ENCODE measurements at regions of chr9 and their contacts with region 1.

Region 1: DNA sequence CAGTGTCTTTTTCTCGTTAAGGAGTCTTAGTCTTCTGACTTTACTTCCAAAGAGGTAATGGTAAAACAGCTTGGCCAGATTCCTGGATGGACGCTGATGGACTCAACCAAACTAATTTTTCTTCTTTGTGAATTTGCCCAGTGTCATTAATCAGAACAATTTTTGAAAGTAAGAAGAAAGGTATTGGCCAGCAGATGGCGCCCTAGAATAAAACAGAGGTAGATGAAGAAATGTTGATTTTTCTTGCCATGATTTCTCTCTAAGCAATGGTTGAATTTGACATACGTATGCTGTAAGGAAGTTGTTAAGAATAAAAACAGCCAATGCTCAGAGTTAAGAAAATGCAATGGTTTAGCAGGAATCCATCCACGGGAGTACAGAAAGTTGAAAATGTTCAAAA is 500.0 kb downstream of the DIRAS2 start:
- DNase-seq: peak; percentile 59
- H3K4me3 Mint-ChIP-seq: no peak overlapping the region
- H3K27ac Mint-ChIP-seq: no peak overlapping the region
- H3K4me1 Mint-ChIP-seq: no peaks in the 10 kb centered on the region
- H3K27me3 Mint-ChIP-seq: peaks cover 79% of the 10 kb centered on the region
- CTCF ChIP-seq: peak; percentile 35

Region 2: GRCh38 chr9:90070931-90071660 is 71.5 kb before region 1 on chr9:
- CTCF ChIA-PET with region 1: no interaction called
- POLR2A ChIA-PET with region 1: no interaction called
- intact Hi-C with region 1: no loop called
- DNase-seq: no peak
- H3K4me3 Mint-ChIP-seq: no peak overlapping the region
- H3K27ac Mint-ChIP-seq: no peak overlapping the region
- H3K4me1 Mint-ChIP-seq: no peaks in the 10 kb centered on the region
- H3K27me3 Mint-ChIP-seq: peaks cover 22% of the 10 kb centered on the region
- CTCF ChIP-seq: no peak

Region 3: GRCh38 chr9:90121762-90122161 is 20.8 kb before region 1 on chr9:
- CTCF ChIA-PET with region 1: interaction called, 20 read pairs
- POLR2A ChIA-PET with region 1: no interaction called
- intact Hi-C with region 1: no loop called
- DNase-seq: no peak
- H3K4me3 Mint-ChIP-seq: no peak overlapping the region
- H3K27ac Mint-ChIP-seq: no peak overlapping the region
- H3K4me1 Mint-ChIP-seq: peaks cover 14% of the 10 kb centered on the region
- H3K27me3 Mint-ChIP-seq: peaks cover 13% of the 10 kb centered on the region
- CTCF ChIP-seq: no peak

Region 4: DNA sequence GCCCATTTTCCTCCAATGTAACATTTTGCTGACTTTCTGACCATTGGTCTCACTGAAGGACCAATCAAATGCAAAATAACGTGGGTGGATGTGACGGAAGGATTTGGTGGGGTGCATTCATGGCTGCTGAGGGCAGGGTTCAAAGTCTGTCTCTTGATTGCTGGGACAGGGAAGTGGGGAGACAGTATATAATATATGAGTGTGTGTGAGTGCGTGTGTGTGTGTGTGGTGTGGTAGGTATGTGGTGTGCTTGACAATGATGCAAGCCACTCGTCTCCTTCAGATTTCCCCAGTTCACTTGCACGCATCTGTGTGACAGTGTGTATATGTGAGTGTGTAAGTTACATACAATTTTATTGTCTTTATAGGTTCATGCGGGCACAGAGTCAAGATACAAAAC is 22.7 kb after region 1 on chr9:
- CTCF ChIA-PET with region 1: interaction called, 12 read pairs
- POLR2A ChIA-PET with region 1: no interaction called
- intact Hi-C with region 1: no loop called
- DNase-seq: no peak
- H3K4me3 Mint-ChIP-seq: no peak overlapping the region
- H3K27ac Mint-ChIP-seq: no peak overlapping the region
- H3K4me1 Mint-ChIP-seq: no peaks in the 10 kb centered on the region
- H3K27me3 Mint-ChIP-seq: peaks cover 46% of the 10 kb centered on the region
- CTCF ChIP-seq: no peak

Region 5: GRCh38 chr9:90219548-90220118 is 77.1 kb after region 1 on chr9:
- CTCF ChIA-PET with region 1: interaction called, 3 read pairs
- POLR2A ChIA-PET with region 1: no interaction called
- intact Hi-C with region 1: loop called (anchors 10 kb)
- DNase-seq: peak; percentile 24
- H3K4me3 Mint-ChIP-seq: no peak overlapping the region
- H3K27ac Mint-ChIP-seq: no peak overlapping the region
- H3K4me1 Mint-ChIP-seq: no peaks in the 10 kb centered on the region
- H3K27me3 Mint-ChIP-seq: peaks cover 24% of the 10 kb centered on the region
- CTCF ChIP-seq: peak; percentile 38

Region 6: DNA sequence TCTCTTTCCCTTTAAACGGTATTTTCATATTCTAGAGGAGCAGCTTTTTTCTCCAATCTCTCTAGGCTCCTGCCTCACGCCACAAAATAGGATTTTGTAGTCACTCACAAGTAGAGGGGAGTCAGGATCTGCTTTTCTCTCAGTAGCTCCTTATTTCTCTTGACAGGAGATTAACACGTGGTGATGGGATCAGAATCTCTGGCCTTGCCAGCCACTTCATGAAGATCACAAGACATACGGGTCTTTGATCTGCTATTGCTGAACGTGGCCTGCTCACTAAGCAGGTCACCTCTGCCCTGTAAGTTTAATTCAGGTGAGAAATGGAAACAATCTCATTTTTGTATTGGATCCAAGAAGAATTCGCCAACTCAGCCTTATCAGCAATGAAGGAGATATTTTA is 242.6 kb after region 1 on chr9:
- CTCF ChIA-PET with region 1: no interaction called
- POLR2A ChIA-PET with region 1: no interaction called
- intact Hi-C with region 1: no loop called
- DNase-seq: no peak
- H3K4me3 Mint-ChIP-seq: no peak overlapping the region
- H3K27ac Mint-ChIP-seq: no peak overlapping the region
- H3K4me1 Mint-ChIP-seq: no peaks in the 10 kb centered on the region
- H3K27me3 Mint-ChIP-seq: peaks cover 89% of the 10 kb centered on the region
- CTCF ChIP-seq: no peak

Region 7: DNA sequence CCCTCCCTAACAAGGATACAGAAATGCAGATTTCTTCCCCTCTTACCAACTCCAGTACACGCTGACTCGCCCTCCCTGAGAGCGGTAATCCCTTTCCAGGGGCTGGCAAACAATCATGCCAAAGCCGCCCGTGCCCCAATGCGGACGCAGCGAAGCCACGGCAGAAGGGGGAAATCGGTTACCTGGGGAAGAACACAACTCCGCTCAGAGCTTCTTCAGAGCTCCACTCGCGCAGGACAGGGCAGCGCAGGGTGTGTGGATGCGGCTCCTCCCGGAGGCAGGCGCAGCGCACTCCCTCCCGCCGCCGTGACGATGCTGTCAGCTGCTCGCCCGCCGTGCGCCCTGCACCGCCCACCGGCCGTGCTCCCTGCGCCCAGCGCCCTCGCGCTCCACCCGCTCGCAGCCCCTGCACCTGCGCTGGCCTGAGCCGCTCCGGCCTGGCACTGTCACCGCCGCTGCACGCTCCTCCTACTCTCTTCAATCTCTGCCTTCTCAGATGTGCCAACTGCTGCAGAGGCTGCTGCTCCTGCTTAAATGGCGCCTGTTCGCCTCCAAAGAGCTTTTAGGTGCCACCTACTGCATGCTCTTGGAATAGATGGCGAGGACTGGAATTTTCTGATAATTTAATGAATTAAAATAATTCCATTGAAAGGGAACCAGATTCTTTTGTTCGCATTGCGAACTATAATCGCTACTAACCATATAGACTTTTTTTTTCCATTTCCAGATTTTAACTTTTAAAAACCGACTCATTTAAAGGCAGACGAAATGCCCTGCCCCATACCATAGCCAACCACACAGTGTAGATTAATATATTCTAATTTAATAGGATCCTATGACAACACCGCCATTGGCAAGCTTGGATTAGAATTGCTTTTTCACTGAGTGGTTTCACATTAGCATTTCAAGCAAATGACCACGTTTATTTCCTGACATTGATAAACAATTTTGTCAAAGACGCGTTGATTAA is 500.3 kb after region 1 on chr9 and contains the start of gene DIRAS2:
- CTCF ChIA-PET with region 1: interaction called, 3 read pairs
- POLR2A ChIA-PET with region 1: no interaction called
- intact Hi-C with region 1: loop called (anchors 10 kb)
- DNase-seq: peak; percentile 33
- H3K4me3 Mint-ChIP-seq: peak within 1 kb of the TSS; percentile 69
- H3K27ac Mint-ChIP-seq: no peak within 1 kb of the TSS
- H3K4me1 Mint-ChIP-seq: no peaks in the 10 kb centered on the region
- H3K27me3 Mint-ChIP-seq: peaks cover 100% of the 10 kb centered on the region
- CTCF ChIP-seq: peak; percentile 41
- total RNA-seq, gene DIRAS2: not detected in 2 replicates

Measured in MCF 10A (cell line).